ENCODE measurements at regions of chr2 and their contacts with region 1.

Region 1: GRCh38 chr2:120343433-120344105 is 2.4 kb upstream of the INHBB start:
- DNase-seq: peak; percentile 94
- H3K4me3 ChIP-seq: peak overlapping the region; percentile 60 to 70 (median 62)
- H3K27ac ChIP-seq: peak overlapping the region in 1 of 4 donors; percentile 34
- H3K4me1 ChIP-seq: peaks cover 36 to 50% (median 46%) of the 10 kb centered on the region in 4 donors
- H3K27me3 ChIP-seq: peaks cover 0 to 97% (median 52%) of the 10 kb centered on the region in 4 donors
- CTCF ChIP-seq: peak; percentile 79 to 84 (median 82)
- EP300 ChIP-seq: no peak
- POLR2A ChIP-seq: no peak

Region 2: GRCh38 chr2:120552800-120553481 is 209.4 kb after region 1 on chr2:
- intact Hi-C with region 1: loop called (anchors 5 kb)
- DNase-seq: peak; percentile 93
- H3K4me3 ChIP-seq: no peak overlapping the region
- H3K27ac ChIP-seq: peak overlapping the region in 2 of 4 donors; percentile 42 to 52
- H3K4me1 ChIP-seq: peaks cover 28 to 36% (median 34%) of the 10 kb centered on the region in 4 donors
- H3K27me3 ChIP-seq: no peaks in the 10 kb centered on the region
- CTCF ChIP-seq: peak; percentile 58 to 68 (median 59)
- EP300 ChIP-seq: peak; percentile 18
- POLR2A ChIP-seq: no peak

Region 3: GRCh38 chr2:120680136-120680761 is 336.7 kb after region 1 on chr2:
- intact Hi-C with region 1: loop called (anchors 1 kb)
- DNase-seq: peak; percentile 95
- H3K4me3 ChIP-seq: no peak overlapping the region
- H3K27ac ChIP-seq: no peak overlapping the region
- H3K4me1 ChIP-seq: peaks cover 0 to 8% (median 2%) of the 10 kb centered on the region in 4 donors
- H3K27me3 ChIP-seq: peaks cover 0 to 56% (median 0%) of the 10 kb centered on the region in 4 donors
- CTCF ChIP-seq: peak; percentile 55 to 77 (median 59)
- EP300 ChIP-seq: no peak
- POLR2A ChIP-seq: no peak

Region 4: DNA sequence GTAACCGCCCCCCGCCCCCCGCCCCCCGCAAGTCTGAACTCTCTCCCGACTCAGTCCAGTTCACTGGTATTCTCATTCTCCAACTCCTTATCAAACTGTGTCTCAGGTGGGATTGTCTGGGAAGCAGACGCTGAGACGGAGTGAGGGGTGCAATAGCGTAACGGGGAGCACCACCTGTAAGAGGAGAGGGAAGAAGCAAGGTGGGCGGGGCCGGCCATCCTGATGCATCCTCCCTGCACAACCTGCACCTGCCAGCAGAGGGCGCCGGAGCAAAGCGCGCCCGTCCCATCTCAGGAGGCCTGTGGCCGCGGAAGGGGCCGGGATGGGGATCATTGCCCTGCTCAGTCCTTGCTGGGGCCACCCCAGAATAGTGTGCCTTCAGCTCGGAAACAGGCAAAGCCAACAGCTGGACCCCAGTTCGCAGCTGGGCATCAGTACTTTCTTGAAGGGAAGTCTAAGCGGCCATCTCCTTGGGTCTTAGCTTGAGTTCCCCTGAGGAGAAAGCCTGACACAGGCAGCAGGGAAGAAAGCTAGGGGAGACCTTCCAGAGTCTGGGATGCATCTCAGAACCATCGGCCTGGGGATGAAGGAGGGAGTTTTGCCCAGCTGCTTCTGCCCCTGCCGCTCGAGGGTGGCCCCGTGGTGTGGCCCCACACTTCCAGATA is 733.4 kb after region 1 on chr2:
- intact Hi-C with region 1: loop called (anchors 10 kb)
- DNase-seq: no peak
- H3K4me3 ChIP-seq: no peak overlapping the region
- H3K27ac ChIP-seq: no peak overlapping the region
- H3K4me1 ChIP-seq: peaks cover 7 to 24% (median 21%) of the 10 kb centered on the region in 4 donors
- H3K27me3 ChIP-seq: peaks cover 0 to 36% (median 0%) of the 10 kb centered on the region in 4 donors
- CTCF ChIP-seq: peak; percentile 68 to 92 (median 70)
- EP300 ChIP-seq: no peak
- POLR2A ChIP-seq: no peak